ENCODE measurements at regions of chr7 and their contacts with region 1.

Region 1: GRCh38 chr7:25408012-25408687 is 179.9 kb upstream of the NPVF start:
- ATAC-seq: peak in 7 of 8 experiments; percentile 36 to 95 (median 80)
- H3K4me3 ChIP-seq: no peak overlapping the region
- H3K27ac ChIP-seq: peak overlapping the region in 1 of 2 donors; percentile 49
- H3K4me1 ChIP-seq: peaks cover 24 to 52% of the 10 kb centered on the region in 2 donors

Region 2: DNA sequence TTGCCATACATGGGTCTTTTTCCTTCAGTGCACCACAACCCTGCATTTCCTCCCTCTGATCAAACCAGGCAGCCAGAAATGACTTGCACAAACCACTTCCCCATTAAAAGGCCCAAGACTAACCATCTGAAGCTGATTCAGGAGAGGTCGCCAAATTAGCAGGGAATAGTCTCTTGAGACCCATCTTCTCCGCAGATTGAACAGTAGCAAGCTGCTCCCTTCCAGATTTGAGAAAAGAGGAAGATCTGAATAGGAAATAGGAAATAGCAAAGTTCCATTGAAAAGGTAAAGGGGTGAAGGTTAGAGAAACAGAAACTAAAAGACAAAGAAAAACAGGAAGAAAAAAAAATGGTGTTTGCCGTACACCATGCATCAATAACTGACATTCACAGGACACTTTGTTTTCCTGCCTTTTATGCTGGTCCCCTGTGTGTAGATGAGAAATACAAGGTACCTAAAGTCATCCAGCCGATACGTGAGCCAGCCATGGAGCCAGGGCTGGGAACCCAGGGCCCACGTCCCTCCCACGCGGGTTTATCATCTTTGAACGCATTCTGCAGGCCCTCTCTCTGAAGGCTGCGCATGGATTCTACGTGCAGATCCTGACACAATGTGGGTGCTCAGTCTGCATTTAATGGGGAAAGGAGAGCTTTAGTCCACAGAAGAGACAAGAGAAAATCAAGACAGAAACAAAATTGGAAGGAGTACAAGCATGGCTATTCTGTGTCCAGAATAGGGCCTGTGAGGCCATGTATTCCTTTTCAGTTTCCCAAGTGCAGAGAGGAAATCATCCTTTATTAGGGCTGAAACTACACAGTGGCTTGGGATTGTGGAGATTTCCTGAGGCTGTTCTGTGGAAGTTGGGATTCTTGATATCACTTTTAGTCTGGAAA is 88.6 kb after region 1 on chr7:
- in situ Hi-C with region 1: no loop called
- ATAC-seq: peak in 1 of 8 experiments; percentile 20
- H3K4me3 ChIP-seq: no peak overlapping the region
- H3K27ac ChIP-seq: peak overlapping the region; percentile 35 to 60
- H3K4me1 ChIP-seq: peaks cover 37 to 43% of the 10 kb centered on the region in 2 donors

Region 3: DNA sequence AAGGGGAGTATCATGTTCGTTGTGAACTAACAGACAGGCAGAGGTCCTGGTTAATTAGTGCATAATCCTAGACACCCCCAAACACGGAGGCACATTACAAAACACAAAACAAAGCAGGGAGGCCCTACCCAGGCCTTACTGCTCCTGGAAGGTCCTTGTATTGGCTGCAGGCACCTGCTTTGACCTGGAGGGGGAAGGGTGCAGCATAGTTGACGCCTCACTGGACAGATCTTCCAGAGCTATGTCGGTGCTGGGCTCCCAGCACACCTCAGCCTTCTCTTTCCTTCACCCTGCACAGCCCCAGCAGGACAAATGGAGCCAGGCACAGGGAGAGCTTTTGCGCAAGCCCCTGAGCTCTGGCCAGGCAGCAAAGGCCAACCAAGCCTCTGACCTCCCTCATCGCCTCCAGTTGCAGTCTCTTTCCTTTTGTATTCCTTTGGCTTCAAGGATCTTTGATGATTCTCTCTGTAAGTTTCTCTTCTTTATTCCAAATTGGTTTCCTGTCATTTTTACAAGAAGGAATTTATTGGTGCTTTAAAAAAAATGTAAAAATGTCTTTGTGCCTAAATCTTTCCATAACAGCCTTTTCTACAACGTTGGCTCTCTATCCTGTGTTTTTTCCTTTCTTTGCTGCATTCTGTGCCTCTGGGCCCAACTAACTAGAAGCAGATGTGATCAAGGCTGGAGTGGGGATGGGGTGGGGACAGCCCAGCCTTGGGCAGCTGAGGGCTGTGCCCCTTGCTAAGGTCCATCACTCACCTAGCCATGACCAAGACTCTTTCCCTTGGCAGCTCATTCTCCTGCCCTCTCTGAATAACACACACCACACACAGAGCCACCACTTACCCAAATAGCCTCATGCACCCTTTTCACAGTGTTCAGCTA is 137.2 kb after region 1 on chr7:
- in situ Hi-C with region 1: loop called in 3 of 9 experiments (anchors 10 to 25 kb)
- ATAC-seq: peak in 2 of 8 experiments; percentile 16 to 27
- H3K4me3 ChIP-seq: no peak overlapping the region
- H3K27ac ChIP-seq: peak overlapping the region in 1 of 2 donors; percentile 53
- H3K4me1 ChIP-seq: peaks cover 22 to 65% of the 10 kb centered on the region in 2 donors

Region 4: GRCh38 chr7:25557379-25557917 is 149.3 kb after region 1 on chr7:
- in situ Hi-C with region 1: loop called in 2 of 9 experiments (anchors 10 kb)
- ATAC-seq: peak in 5 of 8 experiments; percentile 61 to 91 (median 89)
- H3K4me3 ChIP-seq: no peak overlapping the region
- H3K27ac ChIP-seq: peak overlapping the region; percentile 11 to 53
- H3K4me1 ChIP-seq: peaks cover 28 to 61% of the 10 kb centered on the region in 2 donors

Region 5: DNA sequence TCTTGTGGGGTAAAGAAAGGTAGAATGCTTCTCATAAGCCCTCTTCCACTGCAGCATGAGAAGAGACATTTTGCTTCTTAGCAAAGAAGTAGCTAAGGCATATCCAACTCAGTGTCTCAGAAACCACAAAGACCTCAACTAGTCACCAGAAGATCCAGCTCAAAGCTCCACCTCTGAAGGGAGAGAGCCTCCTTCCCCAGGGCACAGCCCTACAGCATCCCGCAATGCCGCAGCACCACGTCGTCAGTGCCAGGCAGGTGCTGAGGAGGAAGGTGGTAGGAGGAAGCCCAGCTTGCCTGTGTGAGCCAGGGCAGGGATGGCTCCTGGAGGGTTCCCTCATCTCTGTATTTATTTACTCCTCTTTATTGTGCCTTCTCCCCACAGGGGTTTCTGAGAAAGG is 205.8 kb after region 1 on chr7:
- in situ Hi-C with region 1: no loop called
- ATAC-seq: no peak
- H3K4me3 ChIP-seq: no peak overlapping the region
- H3K27ac ChIP-seq: no peak overlapping the region
- H3K4me1 ChIP-seq: no peaks in the 10 kb centered on the region